ENCODE measurements at regions of chr2 and their contacts with region 1.

Region 1: DNA sequence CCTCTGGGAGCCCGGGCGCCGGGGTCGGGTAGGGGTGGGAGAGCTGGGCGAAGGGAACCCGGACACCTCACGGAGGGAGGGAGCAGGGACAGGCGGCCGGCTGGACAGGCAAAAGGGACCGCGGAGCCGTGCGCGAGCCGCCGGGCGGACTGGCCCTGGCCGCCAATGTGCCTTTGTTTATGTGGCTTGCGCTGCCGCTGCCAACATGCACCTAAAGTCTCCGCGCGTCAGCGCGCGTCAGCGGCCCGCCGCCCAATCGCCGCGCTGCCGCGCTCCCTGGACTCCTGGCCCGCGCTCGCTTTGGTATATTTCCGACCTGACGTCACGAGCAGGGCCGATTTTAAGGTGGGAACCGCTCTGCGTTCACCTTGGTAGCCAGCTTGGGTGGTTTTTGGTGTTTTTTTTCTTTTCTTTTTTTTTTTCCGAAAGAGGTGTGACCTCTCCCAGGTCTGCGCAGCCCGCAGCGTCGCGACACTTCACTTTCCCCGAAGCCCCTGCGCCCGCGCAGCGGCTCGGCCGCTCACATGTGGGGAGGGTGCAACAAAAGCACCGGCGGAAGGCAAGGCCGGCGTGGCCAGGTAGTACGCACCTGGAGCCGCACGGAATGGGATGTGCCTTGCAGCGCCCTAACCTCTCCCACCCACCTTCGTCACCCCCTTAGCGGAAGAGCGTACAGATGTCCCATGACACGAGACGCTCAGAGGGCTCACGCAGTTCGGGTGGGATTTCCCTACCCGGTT is at the start of gene NR4A2:
- DNase-seq: peak; percentile 89
- ATAC-seq: peak; percentile 71
- H3K4me3 Mint-ChIP-seq: peak within 1 kb of the TSS; percentile 90
- H3K27ac Mint-ChIP-seq: peak within 1 kb of the TSS; percentile 90
- H3K4me1 Mint-ChIP-seq: peaks cover 48% of the 10 kb centered on the region
- H3K27me3 Mint-ChIP-seq: peaks cover 25% of the 10 kb centered on the region
- total RNA-seq, gene NR4A2: 1.9 to 2.0 TPM

Region 2: GRCh38 chr2:156077041-156077735 is 255.5 kb before region 1 on chr2:
- CTCF ChIA-PET with region 1: no interaction called
- POLR2A ChIA-PET with region 1: no interaction called
- DNase-seq: no peak
- ATAC-seq: no peak
- H3K4me3 Mint-ChIP-seq: no peak overlapping the region
- H3K27ac Mint-ChIP-seq: no peak overlapping the region
- H3K4me1 Mint-ChIP-seq: no peaks in the 10 kb centered on the region
- H3K27me3 Mint-ChIP-seq: no peaks in the 10 kb centered on the region

Region 3: DNA sequence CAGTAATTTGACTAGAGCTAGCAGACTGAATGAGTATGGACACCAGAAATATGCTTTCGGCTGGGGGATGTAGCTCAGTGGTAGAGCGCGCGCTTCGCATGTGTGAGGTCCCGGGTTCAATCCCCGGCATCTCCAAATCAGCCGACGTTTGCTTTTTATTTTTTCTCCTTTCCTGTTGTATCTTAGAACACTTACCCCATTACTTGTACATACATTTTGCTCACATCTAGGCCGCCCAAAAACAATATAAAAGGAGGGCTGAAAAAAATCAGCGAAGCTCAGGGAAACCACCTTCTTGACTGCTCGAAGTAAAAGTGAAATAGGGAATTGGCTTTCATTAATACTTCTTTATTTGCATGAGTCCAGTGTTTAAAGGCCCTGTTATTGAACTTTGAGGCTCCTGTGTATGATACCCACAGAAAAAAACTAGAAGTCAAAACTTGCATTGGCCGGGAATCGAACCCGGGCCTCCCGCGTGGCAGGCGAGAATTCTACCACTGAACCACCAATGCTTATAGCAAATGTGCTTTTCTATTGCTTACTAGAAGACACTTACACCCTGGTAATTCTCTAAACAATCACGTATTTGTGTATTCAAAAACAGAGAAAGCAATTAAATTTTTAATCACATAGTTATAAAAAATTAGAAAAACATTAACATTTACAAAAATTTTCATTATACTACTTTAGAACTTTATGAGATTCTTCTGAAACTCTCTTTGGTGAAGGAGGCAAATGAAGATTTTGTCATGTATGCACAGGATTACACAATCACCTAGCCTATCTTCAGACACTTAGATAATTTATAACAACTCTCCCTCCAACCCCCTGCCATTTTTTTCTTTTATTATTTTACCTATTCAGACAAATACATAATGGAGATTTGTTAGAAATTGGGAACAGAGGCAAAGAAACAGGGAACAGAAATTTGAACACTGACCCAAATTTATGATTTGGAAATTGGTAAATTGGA is 68.3 kb after region 1 on chr2:
- CTCF ChIA-PET with region 1: interaction called, 28 read pairs
- POLR2A ChIA-PET with region 1: interaction called, 19 read pairs
- DNase-seq: peak; percentile 84
- ATAC-seq: peak; percentile 81
- H3K4me3 Mint-ChIP-seq: peak overlapping the region; percentile 78
- H3K27ac Mint-ChIP-seq: peak overlapping the region; percentile 85
- H3K4me1 Mint-ChIP-seq: peaks cover 33% of the 10 kb centered on the region
- H3K27me3 Mint-ChIP-seq: no peaks in the 10 kb centered on the region

Region 4: DNA sequence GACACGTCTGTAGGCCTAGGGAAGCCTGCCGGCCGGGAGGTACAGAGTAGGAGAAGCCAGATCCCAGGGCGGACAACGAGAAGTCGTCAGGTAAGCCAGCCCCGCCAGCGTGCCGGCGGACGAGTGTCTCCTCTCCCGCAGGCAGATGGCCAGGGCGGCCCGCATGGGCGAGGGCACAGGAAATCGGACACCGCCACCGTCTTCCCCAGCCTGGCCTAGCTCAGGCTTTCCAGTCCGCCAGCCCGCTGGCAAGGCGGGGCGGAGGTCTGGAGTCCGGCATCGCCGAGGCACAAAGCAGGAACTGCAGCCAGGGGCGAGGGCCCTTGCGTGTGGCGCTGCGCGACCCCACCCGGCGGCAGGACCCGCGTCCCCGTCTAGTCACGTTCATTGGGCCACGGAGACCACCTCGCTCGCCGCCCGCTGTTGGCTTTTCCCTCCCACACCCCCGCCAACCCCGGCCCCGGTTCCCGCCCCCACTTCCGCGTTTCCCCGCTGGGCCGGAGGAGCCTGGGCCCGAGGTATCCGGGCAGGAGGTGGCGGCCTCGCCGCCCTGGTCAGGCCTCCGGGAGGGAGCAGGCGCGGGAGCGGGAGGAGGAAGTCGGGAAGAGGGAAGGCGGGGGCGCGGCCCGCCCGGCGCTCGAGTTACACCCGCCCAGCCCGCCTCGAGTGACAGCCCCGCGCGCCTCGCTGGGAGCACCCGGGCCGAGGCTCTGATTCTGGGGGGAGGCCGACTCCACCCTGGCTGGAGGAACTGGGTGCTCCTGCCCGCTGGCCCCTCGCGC is 103.2 kb after region 1 on chr2 and contains the start of gene GPD2:
- CTCF ChIA-PET with region 1: interaction called, 12 read pairs
- POLR2A ChIA-PET with region 1: interaction called, 5 read pairs
- DNase-seq: peak; percentile 61
- ATAC-seq: peak; percentile 81
- H3K4me3 Mint-ChIP-seq: peak within 1 kb of the TSS; percentile 88
- H3K27ac Mint-ChIP-seq: peak within 1 kb of the TSS; percentile 88
- H3K4me1 Mint-ChIP-seq: peaks cover 37% of the 10 kb centered on the region
- H3K27me3 Mint-ChIP-seq: no peaks in the 10 kb centered on the region
- total RNA-seq, gene GPD2: 13.6 to 14.7 TPM

Region 5: DNA sequence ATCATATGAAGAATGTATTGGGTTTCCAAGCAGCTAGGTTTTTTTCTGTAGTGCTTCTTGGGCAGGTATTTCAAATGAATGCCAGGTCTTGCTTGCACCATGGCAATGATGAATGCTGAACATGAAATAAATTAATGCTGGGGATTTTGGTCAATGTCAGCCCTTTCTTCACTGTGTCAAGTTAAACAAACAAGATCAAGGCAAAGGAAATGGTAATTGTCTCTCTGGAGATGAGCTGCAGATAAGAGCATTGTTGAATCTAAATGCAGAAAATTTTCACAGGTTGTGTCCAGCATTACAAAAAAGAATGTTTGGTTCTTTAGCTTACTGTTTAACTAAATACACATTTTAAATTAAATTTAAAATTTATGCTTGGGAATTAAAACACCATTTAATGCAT is 247.8 kb after region 1 on chr2:
- CTCF ChIA-PET with region 1: interaction called, 11 read pairs
- POLR2A ChIA-PET with region 1: interaction called, 3 read pairs
- DNase-seq: no peak
- ATAC-seq: peak; percentile 53
- H3K4me3 Mint-ChIP-seq: no peak overlapping the region
- H3K27ac Mint-ChIP-seq: peak overlapping the region; percentile 39
- H3K4me1 Mint-ChIP-seq: peaks cover 10% of the 10 kb centered on the region
- H3K27me3 Mint-ChIP-seq: no peaks in the 10 kb centered on the region

Region 6: GRCh38 chr2:156589381-156590079 is 256.8 kb after region 1 on chr2:
- CTCF ChIA-PET with region 1: interaction called, 46 read pairs
- POLR2A ChIA-PET with region 1: interaction called, 3 read pairs
- DNase-seq: peak; percentile 30
- ATAC-seq: no peak
- H3K4me3 Mint-ChIP-seq: no peak overlapping the region
- H3K27ac Mint-ChIP-seq: no peak overlapping the region
- H3K4me1 Mint-ChIP-seq: peaks cover 5% of the 10 kb centered on the region
- H3K27me3 Mint-ChIP-seq: no peaks in the 10 kb centered on the region

Measured in activated CD8-positive, alpha-beta T cell treated with anti-CD3 and anti-CD28 coated beads, Interleukin-2, amount 10 ng/mL, durations not matched to agents 7 days and 5 days (primary cell).